ENCODE measurements at regions of chr5 and their contacts with region 1.

Region 1: GRCh38 chr5:157130925-157131324 is 11.7 kb downstream of the MED7 start:
- DNase-seq: peak in 1 of 2 experiments; percentile 59
- H3K4me3 ChIP-seq: no peak overlapping the region
- H3K4me3 Mint-ChIP-seq: no peak overlapping the region
- H3K27ac Mint-ChIP-seq: no peak overlapping the region
- H3K4me1 ChIP-seq: peaks cover 17% of the 10 kb centered on the region; the same call in 1 of the 2 replicates
- H3K4me1 Mint-ChIP-seq: peaks cover 14% of the 10 kb centered on the region
- H3K27me3 ChIP-seq: no peaks in the 10 kb centered on the region
- H3K27me3 Mint-ChIP-seq: no peaks in the 10 kb centered on the region
- CTCF ChIP-seq: no peak

Region 2: DNA sequence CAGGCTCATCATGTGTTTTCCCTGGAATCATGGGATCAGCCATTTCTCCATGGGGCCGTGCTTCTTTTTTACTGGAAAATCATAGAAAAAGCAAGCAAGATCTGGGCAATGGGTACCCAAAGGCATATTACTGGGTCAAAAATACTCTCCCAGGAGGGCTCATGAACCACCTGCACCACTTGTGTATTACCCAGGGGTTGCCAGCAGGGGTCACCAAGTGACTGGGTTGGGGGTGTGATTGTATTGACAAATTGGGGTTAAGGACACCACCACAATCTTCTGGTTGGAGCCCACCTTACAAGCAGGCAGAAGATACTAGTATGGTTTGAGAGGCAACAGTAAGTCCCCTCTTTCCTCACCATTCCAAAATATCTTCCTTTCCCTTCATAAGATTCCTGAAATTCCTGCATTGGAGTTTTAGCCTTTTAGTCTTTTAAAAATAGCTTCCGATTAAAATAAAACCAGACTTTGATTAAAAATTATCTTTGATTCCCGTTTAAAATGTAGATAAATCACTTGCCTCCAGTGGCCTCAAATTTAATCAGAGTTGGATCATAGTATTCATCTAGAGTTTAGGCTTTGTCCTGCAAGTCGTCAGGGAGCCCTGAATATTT is 1514.0 kb before region 1 on chr5:
- CTCF ChIA-PET with region 1: no interaction called
- POLR2A ChIA-PET with region 1: no interaction called
- intact Hi-C with region 1: loop called (anchors 5 kb)
- DNase-seq: peak; percentile 58 to 75
- H3K4me3 ChIP-seq: no peak overlapping the region
- H3K4me3 Mint-ChIP-seq: no peak overlapping the region
- H3K27ac Mint-ChIP-seq: no peak overlapping the region
- H3K4me1 ChIP-seq: no peaks in the 10 kb centered on the region
- H3K4me1 Mint-ChIP-seq: no peaks in the 10 kb centered on the region
- H3K27me3 ChIP-seq: no peaks in the 10 kb centered on the region
- H3K27me3 Mint-ChIP-seq: peaks cover 13% of the 10 kb centered on the region
- CTCF ChIP-seq: peak; percentile 86 to 91

Region 3: DNA sequence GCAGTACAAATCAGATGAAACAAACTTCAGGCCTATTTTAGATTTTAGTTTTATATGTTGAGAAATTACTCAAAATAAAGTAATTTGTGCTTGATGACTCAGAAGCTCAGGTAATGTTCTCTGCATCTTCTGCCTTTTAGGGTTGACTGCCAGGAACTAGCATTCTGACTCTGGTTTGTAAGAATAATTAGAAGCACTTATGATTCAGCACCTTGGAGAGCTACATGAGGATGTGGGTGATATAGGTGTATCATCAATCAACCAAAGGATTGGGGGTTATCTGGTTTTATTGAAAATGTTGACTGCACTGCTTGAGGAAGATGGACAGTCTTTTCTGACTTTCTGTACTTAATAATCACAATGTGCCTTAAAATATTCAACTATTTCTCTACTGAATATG is 922.7 kb before region 1 on chr5:
- CTCF ChIA-PET with region 1: no interaction called
- POLR2A ChIA-PET with region 1: no interaction called
- intact Hi-C with region 1: no loop called
- DNase-seq: peak in 1 of 2 experiments; percentile 32
- H3K4me3 ChIP-seq: no peak overlapping the region
- H3K4me3 Mint-ChIP-seq: no peak overlapping the region
- H3K27ac Mint-ChIP-seq: no peak overlapping the region
- H3K4me1 ChIP-seq: no peaks in the 10 kb centered on the region
- H3K4me1 Mint-ChIP-seq: no peaks in the 10 kb centered on the region
- H3K27me3 ChIP-seq: no peaks in the 10 kb centered on the region
- H3K27me3 Mint-ChIP-seq: no peaks in the 10 kb centered on the region
- CTCF ChIP-seq: no peak

Region 4: DNA sequence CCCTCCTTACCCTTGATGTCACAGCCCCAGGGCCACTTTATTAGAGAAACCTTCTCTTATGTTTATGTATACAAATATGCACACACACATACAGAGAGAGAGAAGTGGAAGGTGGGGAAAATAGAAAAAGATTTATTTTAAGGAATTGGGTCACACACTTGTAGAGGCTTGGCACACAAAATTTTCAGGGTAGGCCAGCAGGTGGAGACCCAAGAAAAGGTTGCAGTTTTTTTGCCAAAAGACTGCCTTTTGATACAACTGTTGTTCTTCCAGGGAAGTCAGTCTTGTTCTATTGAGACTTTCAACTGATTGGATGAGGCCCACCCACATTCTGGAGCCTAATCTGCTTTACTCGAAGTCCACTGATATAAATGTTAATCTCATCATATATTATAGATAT is 411.9 kb before region 1 on chr5:
- CTCF ChIA-PET with region 1: no interaction called
- POLR2A ChIA-PET with region 1: no interaction called
- intact Hi-C with region 1: loop called (anchors 1 kb)
- DNase-seq: no peak
- H3K4me3 ChIP-seq: no peak overlapping the region
- H3K4me3 Mint-ChIP-seq: no peak overlapping the region
- H3K27ac Mint-ChIP-seq: no peak overlapping the region
- H3K4me1 ChIP-seq: no peaks in the 10 kb centered on the region
- H3K4me1 Mint-ChIP-seq: no peaks in the 10 kb centered on the region
- H3K27me3 ChIP-seq: no peaks in the 10 kb centered on the region
- H3K27me3 Mint-ChIP-seq: peaks cover 2% of the 10 kb centered on the region
- CTCF ChIP-seq: peak in 1 of 2 experiments; percentile 10

Region 5: DNA sequence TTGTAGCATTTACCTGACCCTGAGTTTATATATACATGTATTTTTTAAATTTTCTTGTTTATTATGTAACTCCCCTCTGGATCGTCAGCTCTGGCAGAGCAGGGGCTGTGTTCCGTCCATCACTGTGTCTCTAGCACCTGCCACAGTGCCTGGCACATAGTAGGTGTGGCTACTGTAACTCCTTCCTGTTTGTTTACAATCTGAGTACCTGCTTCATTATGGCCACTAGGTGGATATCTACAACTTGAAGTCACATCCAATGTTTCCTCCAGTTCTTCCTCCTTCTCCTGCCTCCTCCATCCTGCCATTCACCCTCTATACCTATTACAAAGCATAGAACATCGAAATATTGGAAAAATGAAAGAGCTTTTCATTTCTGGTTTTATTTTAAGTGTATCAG is 295.0 kb before region 1 on chr5:
- CTCF ChIA-PET with region 1: no interaction called
- POLR2A ChIA-PET with region 1: no interaction called
- intact Hi-C with region 1: loop called (anchors 1 kb)
- DNase-seq: peak in 1 of 2 experiments; percentile 29
- H3K4me3 ChIP-seq: no peak overlapping the region
- H3K4me3 Mint-ChIP-seq: no peak overlapping the region
- H3K27ac Mint-ChIP-seq: no peak overlapping the region
- H3K4me1 ChIP-seq: no peaks in the 10 kb centered on the region
- H3K4me1 Mint-ChIP-seq: peaks cover 10% of the 10 kb centered on the region
- H3K27me3 ChIP-seq: no peaks in the 10 kb centered on the region
- H3K27me3 Mint-ChIP-seq: peaks cover 4% of the 10 kb centered on the region
- CTCF ChIP-seq: peak; percentile 42 to 62

Region 6: GRCh38 chr5:156883316-156883875 is 247.5 kb before region 1 on chr5:
- CTCF ChIA-PET with region 1: no interaction called
- POLR2A ChIA-PET with region 1: no interaction called
- intact Hi-C with region 1: no loop called
- DNase-seq: no peak
- H3K4me3 ChIP-seq: no peak overlapping the region
- H3K4me3 Mint-ChIP-seq: no peak overlapping the region
- H3K27ac Mint-ChIP-seq: no peak overlapping the region
- H3K4me1 ChIP-seq: no peaks in the 10 kb centered on the region
- H3K4me1 Mint-ChIP-seq: no peaks in the 10 kb centered on the region
- H3K27me3 ChIP-seq: no peaks in the 10 kb centered on the region
- H3K27me3 Mint-ChIP-seq: peaks cover 2% of the 10 kb centered on the region
- CTCF ChIP-seq: no peak

Region 7: DNA sequence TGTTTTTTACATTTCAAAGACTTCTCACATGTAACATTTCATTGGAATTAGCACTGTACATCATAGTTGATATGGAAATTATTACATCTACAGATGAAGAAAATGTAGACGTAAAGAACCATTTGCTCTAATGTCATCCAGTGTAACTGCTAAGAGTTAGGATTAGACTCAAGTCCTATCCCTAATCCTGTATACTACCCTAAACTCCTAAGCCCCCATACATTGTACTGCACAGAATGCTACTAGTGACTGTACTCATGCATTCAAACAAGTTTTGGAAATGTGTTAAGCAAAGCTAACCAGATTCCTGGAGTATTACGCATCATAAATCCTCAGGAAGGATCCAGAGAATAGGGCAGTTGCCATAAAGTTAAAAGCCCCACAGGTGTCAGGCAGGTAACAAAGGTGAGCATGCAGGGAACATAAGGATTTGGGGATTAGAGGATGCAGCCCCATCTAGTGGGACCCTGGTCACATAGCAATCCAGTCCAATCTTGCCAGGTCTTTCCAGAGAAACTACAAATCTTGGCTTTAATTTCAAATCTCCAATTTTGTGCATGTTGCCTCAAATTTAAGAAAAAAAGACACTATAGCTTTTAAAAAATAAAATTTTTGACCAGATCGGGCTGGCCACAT is 104.0 kb before region 1 on chr5:
- CTCF ChIA-PET with region 1: no interaction called
- POLR2A ChIA-PET with region 1: no interaction called
- intact Hi-C with region 1: loop called (anchors 1 kb)
- DNase-seq: peak; percentile 56 to 65
- H3K4me3 ChIP-seq: no peak overlapping the region
- H3K4me3 Mint-ChIP-seq: no peak overlapping the region
- H3K27ac Mint-ChIP-seq: no peak overlapping the region
- H3K4me1 ChIP-seq: peaks cover 17% of the 10 kb centered on the region
- H3K4me1 Mint-ChIP-seq: no peaks in the 10 kb centered on the region
- H3K27me3 ChIP-seq: no peaks in the 10 kb centered on the region
- H3K27me3 Mint-ChIP-seq: no peaks in the 10 kb centered on the region
- CTCF ChIP-seq: peak; percentile 85 to 86

Region 8: DNA sequence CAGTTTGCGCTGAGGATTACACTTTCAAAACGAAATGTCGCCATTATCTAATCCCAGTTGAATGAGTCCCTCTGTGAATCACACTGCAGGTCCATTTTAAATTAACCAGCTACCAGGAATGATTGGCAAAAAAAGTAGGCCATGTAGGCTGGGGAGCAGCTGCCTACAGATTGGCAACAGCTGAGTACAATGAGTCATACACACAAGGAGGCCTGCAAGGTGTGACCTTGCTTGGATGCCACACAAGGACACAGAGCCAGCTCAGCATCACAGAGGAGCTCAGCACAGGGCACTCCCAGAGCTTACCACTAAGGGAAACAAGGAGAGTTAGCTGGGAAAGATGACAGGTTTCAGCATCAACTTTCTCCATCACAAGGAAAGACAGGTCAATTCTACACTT is 84.9 kb before region 1 on chr5:
- CTCF ChIA-PET with region 1: interaction called, 7 read pairs
- POLR2A ChIA-PET with region 1: no interaction called
- intact Hi-C with region 1: loop called (anchors 5 kb)
- DNase-seq: peak; percentile 71 to 91
- H3K4me3 ChIP-seq: no peak overlapping the region
- H3K4me3 Mint-ChIP-seq: peak overlapping the region; percentile 8
- H3K27ac Mint-ChIP-seq: peak overlapping the region; percentile 86
- H3K4me1 ChIP-seq: peaks cover 70% of the 10 kb centered on the region
- H3K4me1 Mint-ChIP-seq: peaks cover 52% of the 10 kb centered on the region
- H3K27me3 ChIP-seq: no peaks in the 10 kb centered on the region
- H3K27me3 Mint-ChIP-seq: no peaks in the 10 kb centered on the region
- CTCF ChIP-seq: no peak

Region 9: GRCh38 chr5:157142317-157143126 is 11.6 kb after region 1 on chr5 and contains the start of gene MED7:
- CTCF ChIA-PET with region 1: interaction called, 14 read pairs
- POLR2A ChIA-PET with region 1: interaction called, 11 read pairs
- intact Hi-C with region 1: no loop called
- DNase-seq: peak; percentile 97 to 98
- H3K4me3 ChIP-seq: peak within 1 kb of the TSS; percentile 82
- H3K4me3 Mint-ChIP-seq: peak within 1 kb of the TSS; percentile 96
- H3K27ac Mint-ChIP-seq: peak within 1 kb of the TSS; percentile 98
- H3K4me1 ChIP-seq: no peaks in the 10 kb centered on the region
- H3K4me1 Mint-ChIP-seq: peaks cover 8% of the 10 kb centered on the region
- H3K27me3 ChIP-seq: no peaks in the 10 kb centered on the region
- H3K27me3 Mint-ChIP-seq: no peaks in the 10 kb centered on the region
- CTCF ChIP-seq: no peak
- total RNA-seq, gene MED7: 14.6 and 17.3 TPM in 2 replicates